Right ventricle myocardium inferior (tissue), 1 donor: ENCODE measurements at regions of chr18 and their contacts with region 1.

Region 1: DNA sequence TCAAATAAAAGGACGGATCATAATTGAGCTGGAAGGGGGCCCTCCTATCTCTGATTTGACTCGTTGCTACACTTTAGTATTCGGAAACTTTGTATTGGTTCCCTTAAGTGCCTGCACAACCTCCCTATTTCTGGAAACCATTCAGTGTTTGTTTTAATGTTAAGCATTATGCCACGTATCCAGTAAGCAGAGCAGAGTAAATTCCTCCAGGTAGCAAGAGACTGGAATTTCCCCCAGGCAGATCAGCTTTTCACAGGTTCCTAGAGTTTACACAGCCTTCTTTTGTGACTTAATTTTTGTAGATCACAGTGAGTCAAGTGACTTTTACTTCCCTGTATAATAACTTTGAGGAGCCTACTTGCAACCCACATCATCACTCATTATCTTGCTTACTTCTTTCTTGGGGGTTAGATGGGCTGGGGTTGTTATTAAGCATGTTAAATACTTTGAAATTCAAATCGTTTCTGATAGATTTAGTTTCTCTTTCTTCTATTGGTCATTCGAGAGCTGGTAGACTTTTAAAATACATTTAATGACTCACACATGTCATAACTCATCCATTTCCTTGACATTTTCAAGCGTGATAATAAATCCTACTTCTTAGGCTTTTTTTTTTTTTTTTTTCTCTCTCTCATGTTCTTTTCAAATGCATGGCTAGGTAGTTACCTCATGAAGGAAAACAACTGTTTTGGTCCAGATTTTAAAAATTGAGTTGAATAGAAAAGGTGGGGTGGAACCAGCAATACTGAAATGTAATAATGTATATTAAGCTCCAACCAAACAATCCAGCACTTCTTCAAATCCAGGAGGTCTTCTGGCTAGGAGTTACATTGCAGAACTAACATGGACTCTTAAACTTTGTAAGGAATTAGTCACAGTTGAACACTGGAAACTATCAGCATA is 219.3 kb downstream of the NEDD4L start:
- DNase-seq: no peak
- ATAC-seq: peak; percentile 56

Region 2: GRCh38 chr18:58310517-58310916 is 47.2 kb after region 1 on chr18:
- intact Hi-C with region 1: loop called (anchors 2 kb)
- DNase-seq: no peak
- ATAC-seq: peak; percentile 61

Region 3: DNA sequence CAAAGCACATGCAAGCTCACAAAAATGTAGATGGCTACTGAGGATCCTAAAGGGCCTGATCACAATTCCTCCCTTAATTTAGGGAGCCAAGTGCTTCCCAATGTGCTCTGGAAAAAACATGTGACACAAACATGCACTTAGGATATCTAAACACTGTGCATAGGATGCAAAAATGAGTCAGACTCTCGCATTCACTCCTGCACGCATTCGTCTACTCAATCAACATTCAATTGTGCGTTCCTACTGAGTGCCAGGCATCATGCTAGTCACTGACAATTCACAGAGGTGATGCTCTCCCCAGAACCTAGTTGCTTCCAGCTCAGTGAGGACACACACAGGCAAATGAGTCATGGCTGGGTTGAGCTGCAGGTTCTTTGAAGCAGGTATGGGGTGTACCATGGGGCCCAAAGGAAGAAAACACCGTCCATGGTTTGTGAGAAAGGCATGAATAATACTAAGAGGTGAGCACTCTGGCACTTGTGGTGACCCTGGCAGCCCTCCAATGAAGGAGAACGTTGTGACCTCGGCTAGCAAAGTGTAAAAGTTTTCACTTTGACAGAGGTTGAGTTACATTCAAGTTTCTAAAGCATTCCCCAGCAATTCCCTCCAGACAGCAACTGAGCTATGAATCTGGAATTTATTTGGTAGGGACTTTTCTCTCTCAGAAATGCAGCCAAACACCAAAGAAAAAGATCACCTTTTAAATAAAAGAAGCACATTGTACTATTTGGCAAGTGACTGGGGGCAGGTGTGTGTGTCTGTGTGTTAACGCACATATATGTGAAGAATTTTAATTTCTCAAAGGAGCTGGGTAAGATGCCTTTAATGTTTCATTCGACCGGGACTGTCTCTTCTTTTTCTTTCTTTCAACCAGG is 192.2 kb after region 1 on chr18:
- intact Hi-C with region 1: no loop called
- DNase-seq: no peak
- ATAC-seq: no peak